Activated T-helper 2 cell treated with anti-CD3 and anti-CD28 coated beads, Interferon-gamma antibody, Interleukin-2, Interleukin-4, amounts not matched to agents 10 μg/mL and 5 μg/mL and 100 μg/mL, durations not matched to agents 14 hours and 24 hours and 36 hours (primary cell): ENCODE measurements at regions of chr2 and their contacts with region 1.

Region 1: GRCh38 chr2:64644177-64645004 is 9.3 kb downstream of the SERTAD2 start:
- DNase-seq: peak; percentile 53
- H3K4me3 Mint-ChIP-seq: peak overlapping the region; percentile 87
- H3K27ac Mint-ChIP-seq: peak overlapping the region; percentile 92
- H3K4me1 Mint-ChIP-seq: peaks cover 72% of the 10 kb centered on the region
- H3K27me3 Mint-ChIP-seq: no peaks in the 10 kb centered on the region

Region 2: DNA sequence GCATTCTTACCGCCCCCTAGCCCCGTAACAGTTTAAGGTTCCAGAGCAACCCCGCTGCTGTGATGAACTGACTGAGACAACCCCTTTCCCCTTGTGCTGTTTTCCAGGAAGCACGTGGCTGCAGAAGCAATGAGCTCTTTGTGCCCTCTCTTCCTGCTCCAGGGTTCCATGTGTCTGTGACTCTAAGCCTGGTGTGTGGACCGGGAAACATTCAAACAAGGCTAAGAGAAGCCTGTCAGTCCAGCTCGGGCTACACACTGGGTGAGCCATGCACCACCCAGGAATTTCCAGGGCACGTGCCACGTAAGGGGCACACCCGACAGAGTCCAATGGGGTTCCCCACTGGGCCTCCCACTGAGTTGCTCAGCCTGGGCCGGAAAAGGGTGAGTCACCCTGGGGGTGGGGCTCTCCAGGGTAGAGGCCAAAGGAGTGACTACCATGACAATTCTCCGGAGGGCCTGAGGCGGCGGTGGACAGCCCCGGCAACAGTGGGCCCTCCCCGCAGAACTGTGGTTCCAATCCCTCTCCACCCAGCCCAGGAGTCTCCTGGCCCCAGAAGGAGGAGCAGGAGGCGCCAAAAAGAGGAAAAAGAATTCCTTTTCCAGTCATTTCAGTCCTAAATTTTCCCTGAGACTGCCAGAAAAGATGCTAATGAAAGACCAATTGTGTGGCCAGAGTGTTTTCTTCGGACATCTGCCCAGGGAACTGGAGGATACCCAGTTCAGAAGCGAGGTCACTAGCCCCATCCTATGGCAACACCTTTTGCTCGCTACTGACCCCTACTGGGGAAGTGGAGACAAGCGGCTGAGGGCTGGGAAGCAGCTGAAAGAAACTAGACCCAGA is 187.0 kb after region 1 on chr2:
- intact Hi-C with region 1: loop called (anchors 1 kb)
- DNase-seq: peak; percentile 69
- H3K4me3 Mint-ChIP-seq: peak overlapping the region; percentile 15
- H3K27ac Mint-ChIP-seq: peak overlapping the region; percentile 81
- H3K4me1 Mint-ChIP-seq: peaks cover 24% of the 10 kb centered on the region
- H3K27me3 Mint-ChIP-seq: peaks cover 8% of the 10 kb centered on the region

Region 3: GRCh38 chr2:64865073-64865830 is 220.9 kb after region 1 on chr2:
- intact Hi-C with region 1: loop called (anchors 1 kb)
- DNase-seq: peak; percentile 57
- H3K4me3 Mint-ChIP-seq: peak overlapping the region; percentile 74
- H3K27ac Mint-ChIP-seq: no peak overlapping the region
- H3K4me1 Mint-ChIP-seq: peaks cover 4% of the 10 kb centered on the region
- H3K27me3 Mint-ChIP-seq: peaks cover 13% of the 10 kb centered on the region